Activated B cell treated with CpG ODN at 0.5 μM for 24 hours (primary cell): ENCODE measurements at regions of chr20 and their contacts with region 1.

Region 1: DNA sequence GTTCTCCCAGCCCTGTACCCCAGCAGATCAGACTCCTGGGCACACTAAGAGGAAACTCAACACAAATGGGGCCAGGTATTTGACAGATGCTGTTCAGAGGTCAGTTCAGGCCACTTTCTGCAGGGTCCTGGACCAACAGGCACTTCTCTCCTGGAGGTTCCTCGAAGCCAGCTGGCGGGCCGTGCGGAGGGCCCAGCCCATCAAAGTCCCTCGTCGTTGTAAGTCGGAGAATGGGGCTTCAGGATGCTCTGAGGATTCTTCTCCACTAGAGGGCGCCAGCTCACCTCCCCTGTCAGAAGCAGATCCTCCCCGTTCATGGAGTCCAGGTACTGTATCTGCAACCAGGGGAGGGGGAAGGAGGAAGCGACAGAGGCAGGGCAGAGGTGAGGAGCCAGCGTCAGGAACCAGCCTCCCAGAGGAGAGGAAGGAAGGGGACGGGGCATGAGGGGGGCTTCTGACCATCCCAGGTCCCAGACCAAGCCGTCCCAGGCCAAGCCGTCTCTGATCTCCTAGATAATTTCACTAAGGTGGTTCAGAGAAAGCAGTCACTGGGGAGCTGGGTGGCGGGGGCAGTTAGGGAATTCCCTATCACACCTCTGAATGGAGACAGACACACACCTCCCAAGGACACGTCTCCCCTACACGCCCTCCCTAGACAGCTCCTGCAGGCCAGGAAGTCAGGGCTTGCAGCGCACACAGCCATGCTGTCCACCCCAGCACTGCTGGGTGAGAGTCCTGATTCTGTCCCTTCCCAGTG is 11.7 kb upstream of the FAM83C start:
- DNase-seq: peak; percentile 57
- ATAC-seq: peak; percentile 84
- H3K4me3 Mint-ChIP-seq: no peak overlapping the region
- H3K27ac Mint-ChIP-seq: no peak overlapping the region
- H3K4me1 Mint-ChIP-seq: peaks cover 11% of the 10 kb centered on the region
- H3K27me3 Mint-ChIP-seq: no peaks in the 10 kb centered on the region
- CTCF ChIP-seq: peak; percentile 28

Region 2: GRCh38 chr20:34834459-34834893 is 469.4 kb before region 1 on chr20:
- CTCF ChIA-PET with region 1: no interaction called
- POLR2A ChIA-PET with region 1: no interaction called
- intact Hi-C with region 1: loop called (anchors 1 kb)
- DNase-seq: no peak
- ATAC-seq: no peak
- H3K4me3 Mint-ChIP-seq: no peak overlapping the region
- H3K27ac Mint-ChIP-seq: no peak overlapping the region
- H3K4me1 Mint-ChIP-seq: peaks cover 2% of the 10 kb centered on the region
- H3K27me3 Mint-ChIP-seq: peaks cover 10% of the 10 kb centered on the region
- CTCF ChIP-seq: no peak

Region 3: DNA sequence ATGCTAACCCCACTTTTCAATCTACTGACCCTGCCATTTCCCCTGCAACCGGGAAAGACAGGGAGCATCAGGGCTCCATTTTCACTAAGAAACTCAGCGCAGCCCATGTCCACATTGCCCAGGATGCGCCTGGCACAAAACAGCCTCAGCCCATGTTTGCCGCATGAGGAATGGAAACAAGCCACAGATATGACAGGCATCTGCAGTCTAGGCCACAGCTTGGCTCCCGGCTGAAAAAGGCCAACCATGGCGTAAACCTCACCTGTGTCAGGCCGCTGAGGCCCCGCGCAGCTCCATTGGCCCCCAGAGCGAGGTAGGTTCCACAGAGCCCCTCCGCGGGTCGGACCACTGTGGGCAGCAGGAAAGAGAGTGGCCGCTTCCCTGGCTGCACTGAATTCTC is 452.9 kb before region 1 on chr20:
- CTCF ChIA-PET with region 1: no interaction called
- POLR2A ChIA-PET with region 1: no interaction called
- intact Hi-C with region 1: no loop called
- DNase-seq: no peak
- ATAC-seq: no peak
- H3K4me3 Mint-ChIP-seq: no peak overlapping the region
- H3K27ac Mint-ChIP-seq: no peak overlapping the region
- H3K4me1 Mint-ChIP-seq: no peaks in the 10 kb centered on the region
- H3K27me3 Mint-ChIP-seq: no peaks in the 10 kb centered on the region
- CTCF ChIP-seq: no peak

Region 4: DNA sequence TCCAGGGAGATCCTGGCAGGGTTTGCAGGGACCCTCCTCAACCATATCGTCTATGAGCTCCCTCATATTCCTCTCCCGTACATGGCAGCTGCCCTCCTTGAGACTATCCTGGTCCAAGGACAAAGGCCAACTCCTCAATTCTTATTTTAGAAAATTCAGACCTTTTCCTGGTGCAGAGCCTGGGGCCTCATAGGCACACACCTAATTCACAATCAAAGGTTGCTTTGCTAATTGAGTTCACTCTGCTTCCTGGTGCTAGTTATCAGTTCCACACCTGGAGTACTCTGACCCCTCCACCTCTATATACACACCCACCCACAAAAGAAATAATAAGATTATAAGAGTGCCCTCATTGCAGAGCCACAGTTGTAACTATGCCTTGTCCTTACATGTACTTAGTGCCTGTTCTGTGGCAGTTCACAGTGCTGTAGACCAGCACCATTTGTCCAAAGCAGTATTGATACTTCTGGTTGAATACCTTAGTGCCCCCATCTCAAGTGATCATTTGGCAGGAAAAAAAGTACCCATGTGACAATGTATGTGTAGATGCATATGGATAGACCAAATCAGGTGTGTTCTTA is 387.0 kb before region 1 on chr20:
- CTCF ChIA-PET with region 1: no interaction called
- POLR2A ChIA-PET with region 1: no interaction called
- intact Hi-C with region 1: no loop called
- DNase-seq: no peak
- ATAC-seq: no peak
- H3K4me3 Mint-ChIP-seq: no peak overlapping the region
- H3K27ac Mint-ChIP-seq: no peak overlapping the region
- H3K4me1 Mint-ChIP-seq: no peaks in the 10 kb centered on the region
- H3K27me3 Mint-ChIP-seq: no peaks in the 10 kb centered on the region
- CTCF ChIP-seq: no peak

Region 5: GRCh38 chr20:35284267-35284991 is 19.5 kb before region 1 on chr20 and contains the start of gene EIF6:
- CTCF ChIA-PET with region 1: interaction called, 3 read pairs
- POLR2A ChIA-PET with region 1: interaction called, 4 read pairs
- intact Hi-C with region 1: loop called (anchors 2 kb)
- DNase-seq: peak; percentile 72
- ATAC-seq: peak; percentile 86
- H3K4me3 Mint-ChIP-seq: peak within 1 kb of the TSS; percentile 90
- H3K27ac Mint-ChIP-seq: peak within 1 kb of the TSS; percentile 92
- H3K4me1 Mint-ChIP-seq: peaks cover 32% of the 10 kb centered on the region
- H3K27me3 Mint-ChIP-seq: no peaks in the 10 kb centered on the region
- CTCF ChIP-seq: no peak
- total RNA-seq, gene EIF6: 137 and 148 TPM in 2 replicates

Region 6: GRCh38 chr20:35329435-35330139 is 25.7 kb after region 1 on chr20:
- CTCF ChIA-PET with region 1: interaction called, 8 read pairs
- POLR2A ChIA-PET with region 1: no interaction called
- intact Hi-C with region 1: loop called (anchors 1 kb)
- DNase-seq: no peak
- ATAC-seq: peak; percentile 57
- H3K4me3 Mint-ChIP-seq: no peak overlapping the region
- H3K27ac Mint-ChIP-seq: no peak overlapping the region
- H3K4me1 Mint-ChIP-seq: no peaks in the 10 kb centered on the region
- H3K27me3 Mint-ChIP-seq: no peaks in the 10 kb centered on the region
- CTCF ChIP-seq: no peak

Region 7: GRCh38 chr20:35447082-35447789 is 143.3 kb after region 1 on chr20:
- CTCF ChIA-PET with region 1: interaction called, 14 read pairs
- POLR2A ChIA-PET with region 1: interaction called, 3 read pairs
- intact Hi-C with region 1: loop called (anchors 1 kb)
- DNase-seq: peak; percentile 83
- ATAC-seq: peak; percentile 100
- H3K4me3 Mint-ChIP-seq: peak overlapping the region; percentile 88
- H3K27ac Mint-ChIP-seq: no peak overlapping the region
- H3K4me1 Mint-ChIP-seq: peaks cover 6% of the 10 kb centered on the region
- H3K27me3 Mint-ChIP-seq: peaks cover 11% of the 10 kb centered on the region
- CTCF ChIP-seq: no peak

Region 8: GRCh38 chr20:35816339-35816738 is 512.4 kb after region 1 on chr20:
- CTCF ChIA-PET with region 1: no interaction called
- POLR2A ChIA-PET with region 1: interaction called, 10 read pairs
- intact Hi-C with region 1: no loop called
- DNase-seq: no peak
- ATAC-seq: no peak
- H3K4me3 Mint-ChIP-seq: no peak overlapping the region
- H3K27ac Mint-ChIP-seq: no peak overlapping the region
- H3K4me1 Mint-ChIP-seq: peaks cover 7% of the 10 kb centered on the region
- H3K27me3 Mint-ChIP-seq: no peaks in the 10 kb centered on the region
- CTCF ChIP-seq: no peak

Region 9: GRCh38 chr20:35956616-35957015 is 652.7 kb after region 1 on chr20:
- CTCF ChIA-PET with region 1: no interaction called
- POLR2A ChIA-PET with region 1: no interaction called
- intact Hi-C with region 1: no loop called
- DNase-seq: no peak
- ATAC-seq: no peak
- H3K4me3 Mint-ChIP-seq: no peak overlapping the region
- H3K27ac Mint-ChIP-seq: no peak overlapping the region
- H3K4me1 Mint-ChIP-seq: peaks cover 22% of the 10 kb centered on the region
- H3K27me3 Mint-ChIP-seq: no peaks in the 10 kb centered on the region
- CTCF ChIP-seq: no peak